Mammary epithelial cell (primary cell): ENCODE measurements at regions of chr2 and their contacts with region 1.

Region 1: GRCh38 chr2:230847883-230848388 is 16.8 kb upstream of the ITM2C start:
- DNase-seq: peak; percentile 68
- H3K4me3 ChIP-seq: peak overlapping the region in 2 of 3 experiments; percentile 20 to 31
- H3K27ac ChIP-seq: no peak overlapping the region
- H3K4me1 ChIP-seq: peaks cover 3% of the 10 kb centered on the region
- H3K27me3 ChIP-seq: peaks cover 5% of the 10 kb centered on the region
- CTCF ChIP-seq: peak; percentile 66 to 86

Region 2: DNA sequence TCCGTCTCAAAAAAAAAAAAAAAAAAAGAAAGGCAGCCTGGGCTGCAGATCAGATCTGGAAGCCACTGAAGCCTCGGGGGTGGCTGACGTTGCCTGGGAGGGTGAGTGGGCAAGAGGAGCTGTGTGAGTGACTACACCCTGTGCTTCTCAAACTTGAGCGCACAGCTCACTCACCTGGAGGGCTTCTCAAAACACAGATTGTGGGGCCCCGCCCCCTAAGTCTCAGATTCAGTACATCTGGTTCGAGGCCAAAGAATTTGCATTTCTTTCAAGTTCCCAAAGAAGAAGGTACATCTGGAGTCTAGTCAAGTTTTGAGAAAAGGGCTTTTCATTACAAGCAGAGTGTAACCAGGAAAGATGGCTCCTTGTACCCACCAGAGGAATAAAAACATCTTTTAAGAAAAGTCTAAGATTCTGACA is 233.0 kb before region 1 on chr2:
- CTCF ChIA-PET with region 1: no interaction called
- dilution Hi-C with region 1: no loop called
- in situ Hi-C with region 1: no loop called
- intact Hi-C with region 1: no loop called
- DNase-seq: peak; percentile 62
- H3K4me3 ChIP-seq: no peak overlapping the region
- H3K27ac ChIP-seq: peak overlapping the region; percentile 30
- H3K4me1 ChIP-seq: peaks cover 12% of the 10 kb centered on the region
- H3K27me3 ChIP-seq: no peaks in the 10 kb centered on the region
- CTCF ChIP-seq: no peak

Region 3: GRCh38 chr2:230987137-230988020 is 139.4 kb after region 1 on chr2:
- CTCF ChIA-PET with region 1: no interaction called
- dilution Hi-C with region 1: no loop called
- in situ Hi-C with region 1: no loop called
- intact Hi-C with region 1: loop called (anchors 1 kb)
- DNase-seq: peak; percentile 44
- H3K4me3 ChIP-seq: peak overlapping the region; percentile 6 to 14 (median 10)
- H3K27ac ChIP-seq: no peak overlapping the region
- H3K4me1 ChIP-seq: no peaks in the 10 kb centered on the region
- H3K27me3 ChIP-seq: no peaks in the 10 kb centered on the region
- CTCF ChIP-seq: peak; percentile 64 to 93

Region 4: GRCh38 chr2:231000211-231000904 is 152.4 kb after region 1 on chr2:
- CTCF ChIA-PET with region 1: no interaction called
- dilution Hi-C with region 1: loop called (anchors 5 kb)
- in situ Hi-C with region 1: no loop called
- intact Hi-C with region 1: no loop called
- DNase-seq: no peak
- H3K4me3 ChIP-seq: no peak overlapping the region
- H3K27ac ChIP-seq: no peak overlapping the region
- H3K4me1 ChIP-seq: no peaks in the 10 kb centered on the region
- H3K27me3 ChIP-seq: no peaks in the 10 kb centered on the region
- CTCF ChIP-seq: peak in 1 of 2 donors; percentile 12

Region 5: GRCh38 chr2:231297108-231297908 is 449.4 kb after region 1 on chr2:
- CTCF ChIA-PET with region 1: no interaction called
- dilution Hi-C with region 1: no loop called
- in situ Hi-C with region 1: no loop called
- intact Hi-C with region 1: no loop called
- DNase-seq: peak; percentile 23
- H3K4me3 ChIP-seq: no peak overlapping the region
- H3K27ac ChIP-seq: no peak overlapping the region
- H3K4me1 ChIP-seq: peaks cover 4% of the 10 kb centered on the region
- H3K27me3 ChIP-seq: no peaks in the 10 kb centered on the region
- CTCF ChIP-seq: peak; percentile 64 to 84